ENCODE measurements at regions of chr7 and their contacts with region 1.

Region 1: GRCh38 chr7:142063551-142064442 is 47.7 kb upstream of the MGAM2 start:
- DNase-seq: no peak
- ATAC-seq: no peak
- H3K4me3 ChIP-seq: no peak overlapping the region
- H3K27ac ChIP-seq: no peak overlapping the region
- H3K4me1 ChIP-seq: no peaks in the 10 kb centered on the region
- H3K27me3 ChIP-seq: no peaks in the 10 kb centered on the region; a peak in 1 of 4 replicates
- CTCF ChIP-seq: no peak
- EP300 ChIP-seq: no peak
- POLR2A ChIP-seq: no peak
- RAD21 ChIP-seq: no peak

Region 2: DNA sequence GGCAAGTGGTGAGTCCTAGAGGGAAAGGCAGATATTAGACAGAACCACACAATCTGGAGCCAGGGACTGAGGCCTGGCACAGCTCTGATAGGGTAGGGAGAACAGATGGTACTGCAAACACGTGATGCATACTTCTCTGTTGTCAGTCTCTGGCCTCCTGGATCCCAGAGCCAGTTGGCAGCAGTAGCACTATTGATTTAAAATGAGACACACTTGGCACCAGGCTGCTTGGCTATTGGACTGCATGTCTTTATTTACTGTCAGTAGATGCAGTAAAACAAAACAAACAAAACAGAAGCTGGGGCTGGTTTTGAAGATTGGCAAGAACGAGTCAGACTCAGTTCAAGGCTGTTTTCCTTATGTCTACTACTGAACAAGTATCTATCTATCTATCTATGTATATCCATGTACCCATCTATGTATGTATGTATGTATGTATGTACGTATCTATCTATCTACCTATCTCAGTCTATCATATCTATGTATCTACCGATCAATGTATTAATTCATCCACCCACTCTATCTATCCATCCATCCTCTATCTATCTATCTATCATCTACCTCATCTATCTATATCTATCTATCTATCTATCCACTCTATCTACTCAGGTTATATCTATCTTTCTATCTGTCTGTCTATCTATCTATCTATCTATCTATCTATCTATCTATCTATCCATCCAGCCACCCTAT is 24.4 kb after region 1 on chr7:
- CTCF ChIA-PET with region 1: no interaction called
- POLR2A ChIA-PET with region 1: no interaction called
- RAD21 ChIA-PET with region 1: no interaction called
- SMC1A ChIA-PET with region 1: no interaction called
- in situ Hi-C with region 1: no loop called
- intact Hi-C with region 1: loop called (anchors 1 kb)
- DNase-seq: no peak
- ATAC-seq: no peak
- H3K4me3 ChIP-seq: no peak overlapping the region
- H3K27ac ChIP-seq: no peak overlapping the region
- H3K4me1 ChIP-seq: no peaks in the 10 kb centered on the region
- H3K27me3 ChIP-seq: no peaks in the 10 kb centered on the region
- CTCF ChIP-seq: no peak
- EP300 ChIP-seq: no peak
- POLR2A ChIP-seq: no peak
- RAD21 ChIP-seq: no peak

Region 3: GRCh38 chr7:142098004-142098403 is 34.2 kb after region 1 on chr7:
- CTCF ChIA-PET with region 1: no interaction called
- POLR2A ChIA-PET with region 1: no interaction called
- RAD21 ChIA-PET with region 1: no interaction called
- SMC1A ChIA-PET with region 1: no interaction called
- in situ Hi-C with region 1: loop called (anchors 5 kb)
- intact Hi-C with region 1: loop called (anchors 1 kb)
- DNase-seq: no peak
- ATAC-seq: no peak
- H3K4me3 ChIP-seq: no peak overlapping the region
- H3K27ac ChIP-seq: no peak overlapping the region
- H3K4me1 ChIP-seq: no peaks in the 10 kb centered on the region
- H3K27me3 ChIP-seq: no peaks in the 10 kb centered on the region; a peak in 1 of 4 replicates
- CTCF ChIP-seq: no peak
- EP300 ChIP-seq: no peak
- POLR2A ChIP-seq: no peak
- RAD21 ChIP-seq: no peak

Region 4: DNA sequence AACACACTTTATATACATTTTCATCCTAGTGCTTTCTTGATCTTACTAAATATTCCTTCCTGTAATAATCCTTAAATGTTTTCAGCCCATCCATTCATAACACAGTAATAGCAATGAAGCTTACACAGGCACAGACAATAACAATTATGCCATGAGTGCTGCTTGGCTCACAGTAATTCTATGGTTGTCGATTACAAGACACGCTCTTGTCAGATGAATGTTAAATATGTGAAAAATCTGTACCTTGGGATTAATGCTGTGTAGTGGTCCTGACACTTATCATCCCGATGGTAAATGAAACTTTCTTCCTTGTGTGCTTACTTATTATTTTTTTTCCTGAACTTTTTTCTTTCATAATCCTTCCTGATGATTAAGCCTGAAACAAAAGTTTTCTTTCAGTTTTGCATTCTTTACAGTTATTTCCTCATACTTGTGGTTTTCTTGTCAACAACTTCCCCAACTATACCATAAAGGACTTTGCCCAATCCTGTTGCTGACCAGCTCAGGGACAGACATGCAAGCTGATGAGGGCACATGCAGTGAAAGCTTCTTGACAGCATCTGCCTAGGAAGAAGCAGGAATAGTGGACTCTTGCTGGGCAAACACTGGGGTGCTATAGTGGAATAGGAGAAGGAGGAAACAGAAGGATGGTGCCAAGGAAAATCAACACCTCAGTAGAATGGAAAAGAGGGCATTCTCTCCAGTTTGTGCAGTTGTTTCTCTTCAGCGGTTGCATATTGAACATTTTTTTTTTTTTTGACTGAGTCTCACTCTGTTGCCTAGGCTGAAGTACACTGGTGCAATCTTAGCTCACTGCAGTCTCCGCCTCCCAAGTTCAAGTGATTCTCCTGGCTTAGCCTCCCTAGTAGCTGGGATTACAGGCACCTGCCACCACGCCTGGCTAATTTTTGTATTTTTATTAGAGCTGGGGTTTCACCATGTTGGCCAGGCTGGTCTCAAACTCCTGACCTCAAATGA is 41.0 kb after region 1 on chr7:
- CTCF ChIA-PET with region 1: no interaction called
- POLR2A ChIA-PET with region 1: no interaction called
- RAD21 ChIA-PET with region 1: no interaction called
- SMC1A ChIA-PET with region 1: no interaction called
- in situ Hi-C with region 1: loop called (anchors 5 kb)
- intact Hi-C with region 1: no loop called
- DNase-seq: no peak
- ATAC-seq: no peak
- H3K4me3 ChIP-seq: no peak overlapping the region
- H3K27ac ChIP-seq: no peak overlapping the region
- H3K4me1 ChIP-seq: no peaks in the 10 kb centered on the region
- H3K27me3 ChIP-seq: no peaks in the 10 kb centered on the region
- CTCF ChIP-seq: no peak
- EP300 ChIP-seq: no peak
- POLR2A ChIP-seq: no peak
- RAD21 ChIP-seq: no peak

Measured in GM12878 (cell line).